ENCODE measurements at regions of chr14 and their contacts with region 1.

Region 1: DNA sequence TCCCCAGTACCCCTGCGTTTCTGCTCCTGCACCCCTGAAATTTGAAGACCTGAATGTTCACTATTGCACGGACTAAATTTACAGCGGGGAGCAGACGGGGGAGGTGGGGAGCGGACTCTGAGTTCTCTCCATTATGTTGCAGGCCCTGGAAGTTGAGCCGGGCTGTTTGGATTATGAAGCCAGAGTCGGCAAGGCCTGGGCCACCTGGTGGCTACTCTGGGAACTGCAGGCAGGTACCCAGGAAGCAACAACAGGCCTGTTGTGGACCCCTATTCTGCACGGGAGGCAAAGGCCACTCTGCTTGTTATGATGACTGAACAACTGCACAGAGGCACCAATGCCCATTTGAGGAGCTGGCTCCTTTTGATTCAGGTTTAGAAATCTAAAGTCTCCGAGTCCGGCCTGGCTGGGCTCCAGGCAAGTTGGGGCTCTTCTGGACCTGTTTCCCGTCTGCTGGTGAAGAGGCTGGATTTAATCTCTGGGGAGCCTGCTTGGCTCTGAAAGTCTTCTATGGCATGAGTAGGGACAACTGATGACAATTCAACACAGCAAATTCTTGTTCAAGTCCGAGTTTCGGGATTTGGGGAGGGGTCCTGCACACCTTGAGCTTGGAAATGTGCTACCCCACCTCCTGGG is 34.1 kb upstream of the FAM181A start:
- DNase-seq: peak; percentile 93
- ATAC-seq: peak; percentile 68
- H3K4me3 Mint-ChIP-seq: no peak overlapping the region
- H3K27ac Mint-ChIP-seq: no peak overlapping the region
- H3K4me1 Mint-ChIP-seq: peaks cover 43% of the 10 kb centered on the region
- H3K27me3 Mint-ChIP-seq: peaks cover 3% of the 10 kb centered on the region
- CTCF ChIP-seq: peak; percentile 100

Region 2: DNA sequence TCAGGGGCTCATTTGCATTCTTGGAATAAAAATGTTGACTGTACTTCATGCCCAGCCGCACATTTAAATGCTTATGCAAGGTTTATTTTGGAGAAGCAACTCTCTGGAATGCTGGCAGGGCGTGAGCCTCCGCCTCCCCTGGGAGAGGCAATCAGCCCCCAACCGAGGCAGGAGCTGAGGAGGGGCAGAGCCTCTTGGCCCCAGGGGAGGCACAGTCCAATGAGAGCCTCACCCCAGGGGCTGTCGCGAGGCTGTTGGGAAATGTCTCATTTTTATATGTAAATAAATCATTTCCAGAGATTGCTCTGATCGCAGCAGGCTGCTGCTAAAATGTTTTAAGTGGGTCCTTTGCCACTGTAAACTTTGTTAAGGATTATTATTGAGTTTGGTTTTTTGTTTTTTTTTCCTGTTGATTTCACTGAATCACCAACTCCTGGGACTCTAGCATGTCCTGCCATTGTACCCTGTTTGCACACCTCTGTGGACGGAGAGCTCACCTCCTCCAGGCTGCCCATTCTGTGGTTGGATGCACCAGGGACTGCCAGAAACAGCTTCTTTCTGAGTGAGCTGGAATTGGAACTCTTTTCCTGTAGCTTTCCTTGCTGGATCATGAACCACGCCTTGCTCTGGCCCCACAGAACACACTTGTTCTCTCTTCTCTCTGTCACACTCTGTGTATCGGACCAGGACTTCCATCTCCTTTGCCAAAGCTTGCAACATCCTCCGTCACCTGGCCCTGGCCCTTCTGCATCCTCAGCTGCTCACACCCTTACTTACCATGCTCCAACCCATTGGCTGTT is 12.8 kb before region 1 on chr14:
- CTCF ChIA-PET with region 1: interaction called, 10 read pairs
- POLR2A ChIA-PET with region 1: no interaction called
- DNase-seq: no peak
- ATAC-seq: peak; percentile 76
- H3K4me3 Mint-ChIP-seq: no peak overlapping the region
- H3K27ac Mint-ChIP-seq: no peak overlapping the region
- H3K4me1 Mint-ChIP-seq: peaks cover 25% of the 10 kb centered on the region
- H3K27me3 Mint-ChIP-seq: peaks cover 34% of the 10 kb centered on the region
- CTCF ChIP-seq: no peak